Caco-2 (cell line): ENCODE measurements at regions of chr3 and their contacts with region 1.

Region 1: DNA sequence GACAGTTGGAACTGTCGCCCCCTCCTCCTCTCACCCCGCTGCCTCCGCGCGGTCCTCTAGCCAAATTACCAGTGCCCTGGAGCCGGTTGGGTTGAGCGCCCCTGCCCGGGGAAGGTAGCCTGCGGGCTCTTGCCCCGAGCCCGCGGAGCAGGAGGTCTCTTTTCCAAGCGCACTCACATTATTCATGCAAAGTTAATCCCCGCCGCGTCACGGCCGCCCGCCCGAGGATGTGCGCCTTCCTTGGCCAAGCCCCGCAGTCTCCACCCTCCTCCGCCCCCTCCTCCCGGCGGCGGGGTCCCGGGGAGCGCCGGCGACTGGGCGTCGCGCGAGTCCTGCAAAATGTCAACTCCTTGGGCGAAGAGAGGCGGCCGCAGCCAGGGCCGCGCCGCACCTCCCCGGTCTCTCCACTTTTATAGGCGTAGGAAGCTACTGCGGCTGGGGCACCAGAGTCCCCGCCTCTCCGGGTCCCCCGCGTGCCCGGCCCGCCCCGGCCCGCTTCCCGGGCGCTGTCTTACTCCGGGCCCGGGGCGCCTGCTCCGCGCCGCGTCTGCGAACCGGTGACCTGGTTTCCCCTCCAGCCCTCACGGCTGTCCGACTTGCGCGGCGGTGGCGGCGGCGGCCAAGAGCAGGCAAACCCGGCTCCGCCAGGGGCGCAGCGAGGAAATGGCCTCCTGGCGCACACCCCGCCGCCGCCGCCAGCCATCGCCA is at the start of gene THRB:
- DNase-seq: peak; percentile 80 to 87
- H3K4me3 ChIP-seq: peak within 1 kb of the TSS; percentile 88
- H3K4me3 Mint-ChIP-seq: peak within 1 kb of the TSS; percentile 95
- H3K27ac Mint-ChIP-seq: peak within 1 kb of the TSS; percentile 95
- H3K4me1 ChIP-seq: peaks cover 10% of the 10 kb centered on the region
- H3K4me1 Mint-ChIP-seq: no peaks in the 10 kb centered on the region
- H3K27me3 ChIP-seq: no peaks in the 10 kb centered on the region
- H3K27me3 Mint-ChIP-seq: no peaks in the 10 kb centered on the region
- CTCF ChIP-seq: peak; percentile 18 to 26
- total RNA-seq, gene THRB: 17.5 and 19.4 TPM in 2 replicates

Region 2: DNA sequence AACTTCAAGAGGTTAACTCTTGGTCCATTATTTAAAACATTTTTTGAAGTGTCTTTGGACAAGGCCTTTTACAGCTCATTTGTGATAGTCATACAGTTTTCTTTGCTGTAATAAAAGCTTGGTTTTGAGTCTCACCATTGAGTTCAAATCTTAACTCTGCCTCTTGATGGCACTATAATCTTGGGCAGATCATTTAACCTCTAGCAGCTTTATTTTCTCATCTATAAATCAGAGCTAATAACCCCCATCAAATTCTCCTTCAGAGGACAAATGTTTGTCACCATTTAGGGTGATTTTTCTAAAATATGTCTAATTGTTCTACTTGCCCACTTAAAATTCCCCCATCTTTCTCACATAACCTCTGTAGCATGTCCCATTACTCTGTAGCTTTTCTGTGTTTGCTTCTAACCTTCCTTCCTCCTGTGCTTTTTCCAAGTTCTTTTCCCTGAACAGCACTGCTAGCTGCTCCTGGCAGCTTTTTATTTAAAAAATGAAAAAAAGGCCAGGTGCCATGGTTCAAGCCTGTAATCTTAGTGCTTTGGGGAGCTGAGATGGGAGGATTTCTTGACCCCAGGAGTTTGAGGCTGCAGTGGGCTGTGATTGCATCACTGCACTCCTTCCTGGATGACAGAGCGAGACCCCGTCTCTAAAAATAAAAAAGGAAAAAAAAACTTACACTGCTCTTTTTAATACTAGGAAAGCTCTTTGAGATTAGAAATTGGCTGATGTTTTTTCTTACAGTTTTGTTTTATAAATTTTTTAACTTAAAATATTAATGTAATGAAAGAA is 660.5 kb before region 1 on chr3:
- CTCF ChIA-PET with region 1: no interaction called
- POLR2A ChIA-PET with region 1: no interaction called
- intact Hi-C with region 1: no loop called
- DNase-seq: no peak
- H3K4me3 ChIP-seq: no peak overlapping the region
- H3K4me3 Mint-ChIP-seq: no peak overlapping the region
- H3K27ac Mint-ChIP-seq: no peak overlapping the region
- H3K4me1 ChIP-seq: no peaks in the 10 kb centered on the region
- H3K4me1 Mint-ChIP-seq: no peaks in the 10 kb centered on the region
- H3K27me3 ChIP-seq: no peaks in the 10 kb centered on the region
- H3K27me3 Mint-ChIP-seq: no peaks in the 10 kb centered on the region
- CTCF ChIP-seq: no peak

Region 3: DNA sequence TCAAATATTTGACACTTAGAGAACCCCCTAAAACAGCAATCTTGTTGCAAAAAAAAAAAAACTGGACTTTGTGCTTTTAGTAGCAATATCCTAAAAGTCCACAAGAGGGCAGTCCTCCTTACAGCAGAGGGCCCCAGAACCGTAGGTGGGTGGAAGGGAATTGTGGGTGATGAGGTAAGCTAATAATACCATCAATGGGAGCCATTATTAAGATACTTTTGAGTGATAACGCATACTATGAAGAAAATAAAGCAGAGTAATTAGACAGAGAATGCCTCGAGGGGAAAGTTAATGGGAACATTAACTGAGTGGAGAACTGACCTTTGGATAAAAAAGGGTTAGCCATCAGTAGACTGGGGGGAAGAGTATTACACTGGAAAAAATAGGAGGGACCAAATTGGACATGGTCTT is 230.0 kb before region 1 on chr3:
- CTCF ChIA-PET with region 1: interaction called, 10 read pairs
- POLR2A ChIA-PET with region 1: no interaction called
- intact Hi-C with region 1: loop called (anchors 1 kb)
- DNase-seq: peak in 1 of 2 experiments; percentile 53
- H3K4me3 ChIP-seq: no peak overlapping the region
- H3K4me3 Mint-ChIP-seq: no peak overlapping the region
- H3K27ac Mint-ChIP-seq: no peak overlapping the region
- H3K4me1 ChIP-seq: no peaks in the 10 kb centered on the region
- H3K4me1 Mint-ChIP-seq: peaks cover 6% of the 10 kb centered on the region
- H3K27me3 ChIP-seq: no peaks in the 10 kb centered on the region
- H3K27me3 Mint-ChIP-seq: no peaks in the 10 kb centered on the region
- CTCF ChIP-seq: peak; percentile 67 to 76

Region 4: GRCh38 chr3:24365194-24365612 is 129.6 kb before region 1 on chr3:
- CTCF ChIA-PET with region 1: interaction called, 6 read pairs
- POLR2A ChIA-PET with region 1: no interaction called
- intact Hi-C with region 1: loop called (anchors 1 kb)
- DNase-seq: peak; percentile 15 to 44
- H3K4me3 ChIP-seq: no peak overlapping the region
- H3K4me3 Mint-ChIP-seq: no peak overlapping the region
- H3K27ac Mint-ChIP-seq: no peak overlapping the region
- H3K4me1 ChIP-seq: peaks cover 48% of the 10 kb centered on the region
- H3K4me1 Mint-ChIP-seq: peaks cover 20% of the 10 kb centered on the region
- H3K27me3 ChIP-seq: no peaks in the 10 kb centered on the region
- H3K27me3 Mint-ChIP-seq: no peaks in the 10 kb centered on the region
- CTCF ChIP-seq: no peak

Region 5: GRCh38 chr3:24451461-24452099 is 43.2 kb before region 1 on chr3:
- CTCF ChIA-PET with region 1: interaction called, 11 read pairs
- POLR2A ChIA-PET with region 1: interaction called, 5 read pairs
- intact Hi-C with region 1: loop called (anchors 1 kb)
- DNase-seq: peak; percentile 90 to 92
- H3K4me3 ChIP-seq: 0 out of 2 replicates have a peak overlapping the region, but pooled peaks have one; percentile 4
- H3K4me3 Mint-ChIP-seq: peak overlapping the region; percentile 74
- H3K27ac Mint-ChIP-seq: peak overlapping the region; percentile 93
- H3K4me1 ChIP-seq: peaks cover 83% of the 10 kb centered on the region
- H3K4me1 Mint-ChIP-seq: peaks cover 38% of the 10 kb centered on the region
- H3K27me3 ChIP-seq: no peaks in the 10 kb centered on the region
- H3K27me3 Mint-ChIP-seq: no peaks in the 10 kb centered on the region
- CTCF ChIP-seq: no peak

Region 6: GRCh38 chr3:24680214-24680967 is 185.6 kb after region 1 on chr3:
- CTCF ChIA-PET with region 1: interaction called, 3 read pairs
- POLR2A ChIA-PET with region 1: no interaction called
- intact Hi-C with region 1: loop called (anchors 2 kb)
- DNase-seq: peak; percentile 48 to 75
- H3K4me3 ChIP-seq: no peak overlapping the region
- H3K4me3 Mint-ChIP-seq: no peak overlapping the region
- H3K27ac Mint-ChIP-seq: no peak overlapping the region
- H3K4me1 ChIP-seq: no peaks in the 10 kb centered on the region
- H3K4me1 Mint-ChIP-seq: no peaks in the 10 kb centered on the region
- H3K27me3 ChIP-seq: no peaks in the 10 kb centered on the region
- H3K27me3 Mint-ChIP-seq: no peaks in the 10 kb centered on the region
- CTCF ChIP-seq: peak; percentile 70 to 83